ENCODE measurements at regions of chr4 and their contacts with region 1.

Region 1: GRCh38 chr4:112938461-112939058 is 110.9 kb upstream of the ANK2 start:
- DNase-seq: no peak
- ATAC-seq: peak; percentile 37
- H3K4me3 Mint-ChIP-seq: no peak overlapping the region
- H3K27ac Mint-ChIP-seq: no peak overlapping the region
- H3K4me1 Mint-ChIP-seq: no peaks in the 10 kb centered on the region
- H3K27me3 Mint-ChIP-seq: peaks cover 5% of the 10 kb centered on the region
- CTCF ChIP-seq: peak; percentile 65

Region 2: DNA sequence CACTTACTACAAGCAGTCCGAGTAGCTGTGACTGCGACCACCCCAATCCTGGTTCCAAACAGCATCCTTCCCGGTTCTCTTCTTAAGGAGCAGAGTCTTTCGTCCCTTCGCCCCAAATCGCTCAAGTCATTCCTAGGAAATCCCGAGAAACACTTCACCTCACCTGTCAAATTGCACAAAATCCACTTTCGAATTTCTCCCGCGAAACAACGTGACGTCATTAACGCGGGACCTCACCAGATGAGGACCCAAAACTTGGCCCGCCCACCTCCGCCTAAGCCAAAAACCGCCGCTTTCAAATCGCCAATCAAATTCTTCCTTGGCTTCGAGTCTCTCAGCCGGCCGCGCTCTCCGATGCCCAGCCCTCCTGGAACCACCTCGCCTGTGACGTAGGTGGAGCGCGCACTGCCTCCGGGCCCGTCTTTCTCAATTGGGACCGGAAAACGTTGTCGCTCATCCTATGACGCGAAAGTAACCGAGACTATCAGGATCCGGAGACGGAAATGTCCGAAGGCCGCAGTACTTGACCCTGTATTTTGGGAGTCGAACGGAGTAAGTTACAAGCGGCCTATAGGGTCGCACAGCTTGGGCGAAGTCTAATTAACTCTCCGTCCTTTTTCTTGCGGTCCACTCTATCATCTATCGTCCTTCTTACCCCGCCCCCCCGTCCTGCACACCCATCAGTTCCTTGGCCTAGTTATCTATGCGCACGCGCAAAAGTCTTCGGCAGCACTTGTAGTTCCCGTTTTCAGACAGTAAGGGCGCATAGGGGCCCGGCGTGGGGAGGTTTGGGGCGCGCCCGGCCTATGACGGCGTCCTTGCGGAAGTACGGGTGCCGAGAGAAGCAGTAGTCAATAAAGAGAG is 301.6 kb before region 1 on chr4 and contains the starts of genes LARP7 and ZGRF1:
- CTCF ChIA-PET with region 1: interaction called, 5 read pairs
- POLR2A ChIA-PET with region 1: no interaction called
- intact Hi-C with region 1: loop called (anchors 10 kb)
- DNase-seq: peak; percentile 99
- ATAC-seq: peak; percentile 95
- H3K4me3 Mint-ChIP-seq: no peak within 1 kb of the TSS
- H3K27ac Mint-ChIP-seq: no peak within 1 kb of the TSS
- H3K4me1 Mint-ChIP-seq: peaks cover 23% of the 10 kb centered on the region
- H3K27me3 Mint-ChIP-seq: no peaks in the 10 kb centered on the region
- CTCF ChIP-seq: peak; percentile 94
- total RNA-seq, gene LARP7: 43.2 TPM
- total RNA-seq, gene ZGRF1: 45.7 to 47.3 TPM

Region 3: GRCh38 chr4:112927544-112927943 is 11.0 kb before region 1 on chr4:
- CTCF ChIA-PET with region 1: interaction called, 11 read pairs
- POLR2A ChIA-PET with region 1: no interaction called
- intact Hi-C with region 1: no loop called
- DNase-seq: no peak
- ATAC-seq: no peak
- H3K4me3 Mint-ChIP-seq: no peak overlapping the region
- H3K27ac Mint-ChIP-seq: no peak overlapping the region
- H3K4me1 Mint-ChIP-seq: no peaks in the 10 kb centered on the region
- H3K27me3 Mint-ChIP-seq: peaks cover 7% of the 10 kb centered on the region
- CTCF ChIP-seq: no peak

Region 4: GRCh38 chr4:112951362-112952312 is 13.1 kb after region 1 on chr4:
- CTCF ChIA-PET with region 1: interaction called, 21 read pairs
- POLR2A ChIA-PET with region 1: no interaction called
- intact Hi-C with region 1: no loop called
- DNase-seq: no peak
- ATAC-seq: no peak
- H3K4me3 Mint-ChIP-seq: no peak overlapping the region
- H3K27ac Mint-ChIP-seq: no peak overlapping the region
- H3K4me1 Mint-ChIP-seq: no peaks in the 10 kb centered on the region
- H3K27me3 Mint-ChIP-seq: peaks cover 8% of the 10 kb centered on the region
- CTCF ChIP-seq: peak; percentile 61